ENCODE measurements at regions of chr1 and their contacts with region 1.

Region 1: DNA sequence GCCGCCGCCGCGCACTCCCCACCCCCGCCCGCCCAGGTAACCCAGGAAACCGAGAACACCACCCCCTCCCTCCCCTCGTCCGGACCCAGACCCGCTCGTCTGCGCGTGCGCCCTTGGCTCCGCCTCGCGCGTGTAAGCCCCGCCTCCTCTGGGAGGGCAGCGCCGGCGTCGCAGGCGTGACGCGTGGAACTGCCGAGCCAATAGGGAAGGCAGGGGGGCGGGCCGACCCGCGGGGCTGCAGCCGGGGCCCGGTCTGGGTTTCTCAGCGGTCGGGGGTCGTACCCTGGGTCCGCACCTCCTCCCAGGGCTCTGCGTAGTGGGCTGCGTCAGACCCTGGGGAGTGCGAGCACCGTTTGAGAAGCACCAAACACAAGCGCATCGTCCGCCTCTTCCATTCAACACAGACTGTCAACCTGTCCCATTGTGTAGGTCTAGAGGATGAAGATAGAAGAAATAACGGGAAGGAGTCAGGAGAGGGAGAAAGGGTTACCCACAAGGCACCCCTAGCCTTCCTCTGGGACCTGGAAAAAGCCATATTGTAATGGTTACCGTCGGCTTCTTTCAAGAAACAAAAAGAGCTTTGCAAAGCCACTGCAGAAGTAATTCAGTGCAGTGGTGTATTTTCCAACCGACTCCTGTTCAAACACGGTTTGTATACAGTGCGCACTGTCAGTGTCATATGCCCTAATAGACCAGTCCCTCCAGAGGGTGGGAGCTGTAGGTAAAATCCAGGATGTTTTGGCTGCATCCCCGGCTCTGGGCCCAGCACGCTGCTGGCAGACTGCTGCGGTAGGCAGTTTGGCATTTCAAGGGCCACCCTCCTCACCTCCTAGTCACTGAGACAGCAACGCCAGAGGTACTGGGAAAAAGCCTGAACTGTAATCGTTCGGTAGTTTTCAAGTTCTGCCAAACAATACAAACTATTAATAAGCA is 473 bp upstream of the LYST start:
- DNase-seq: peak; percentile 92
- H3K4me3 ChIP-seq: peak overlapping the region; percentile 60 to 97 (median 61)
- H3K27ac ChIP-seq: peak overlapping the region; percentile 1
- H3K4me1 ChIP-seq: peaks cover 13% of the 10 kb centered on the region
- H3K27me3 ChIP-seq: peaks cover 0 to 2% of the 10 kb centered on the region in 2 experiments
- CTCF ChIP-seq: no peak
- POLR2A ChIP-seq: peak; percentile 85

Region 2: DNA sequence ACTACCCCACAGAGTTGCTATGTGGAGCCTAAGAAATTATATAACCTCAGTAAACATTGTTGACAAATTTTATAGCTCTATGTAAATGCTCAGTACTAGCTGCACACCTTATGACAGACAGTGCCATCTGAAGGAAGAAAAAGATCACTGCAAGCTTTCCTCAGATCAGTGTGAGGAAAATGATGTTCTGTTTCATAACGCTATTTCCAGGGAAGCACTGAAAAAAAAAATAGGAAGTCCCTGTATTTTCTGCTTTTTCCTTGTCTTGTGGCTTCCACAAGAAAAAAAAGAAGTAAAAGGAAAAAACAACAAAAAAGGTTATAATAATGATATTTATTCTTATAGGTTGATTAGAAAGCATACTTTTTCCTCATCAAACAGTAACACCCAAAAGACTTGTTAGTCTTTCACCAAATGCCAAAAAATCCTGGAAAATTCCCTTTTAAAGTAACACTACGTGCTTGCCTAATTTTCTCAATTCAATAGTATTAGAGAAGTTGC is 23.7 kb before region 1 on chr1:
- CTCF ChIA-PET with region 1: interaction called, 13 read pairs
- POLR2A ChIA-PET with region 1: no interaction called
- dilution Hi-C with region 1: no loop called
- intact Hi-C with region 1: no loop called
- DNase-seq: peak; percentile 24
- H3K4me3 ChIP-seq: no peak overlapping the region
- H3K27ac ChIP-seq: no peak overlapping the region
- H3K4me1 ChIP-seq: no peaks in the 10 kb centered on the region
- H3K27me3 ChIP-seq: no peaks in the 10 kb centered on the region
- CTCF ChIP-seq: peak in 1 of 2 donors; percentile 16
- POLR2A ChIP-seq: no peak

Region 3: DNA sequence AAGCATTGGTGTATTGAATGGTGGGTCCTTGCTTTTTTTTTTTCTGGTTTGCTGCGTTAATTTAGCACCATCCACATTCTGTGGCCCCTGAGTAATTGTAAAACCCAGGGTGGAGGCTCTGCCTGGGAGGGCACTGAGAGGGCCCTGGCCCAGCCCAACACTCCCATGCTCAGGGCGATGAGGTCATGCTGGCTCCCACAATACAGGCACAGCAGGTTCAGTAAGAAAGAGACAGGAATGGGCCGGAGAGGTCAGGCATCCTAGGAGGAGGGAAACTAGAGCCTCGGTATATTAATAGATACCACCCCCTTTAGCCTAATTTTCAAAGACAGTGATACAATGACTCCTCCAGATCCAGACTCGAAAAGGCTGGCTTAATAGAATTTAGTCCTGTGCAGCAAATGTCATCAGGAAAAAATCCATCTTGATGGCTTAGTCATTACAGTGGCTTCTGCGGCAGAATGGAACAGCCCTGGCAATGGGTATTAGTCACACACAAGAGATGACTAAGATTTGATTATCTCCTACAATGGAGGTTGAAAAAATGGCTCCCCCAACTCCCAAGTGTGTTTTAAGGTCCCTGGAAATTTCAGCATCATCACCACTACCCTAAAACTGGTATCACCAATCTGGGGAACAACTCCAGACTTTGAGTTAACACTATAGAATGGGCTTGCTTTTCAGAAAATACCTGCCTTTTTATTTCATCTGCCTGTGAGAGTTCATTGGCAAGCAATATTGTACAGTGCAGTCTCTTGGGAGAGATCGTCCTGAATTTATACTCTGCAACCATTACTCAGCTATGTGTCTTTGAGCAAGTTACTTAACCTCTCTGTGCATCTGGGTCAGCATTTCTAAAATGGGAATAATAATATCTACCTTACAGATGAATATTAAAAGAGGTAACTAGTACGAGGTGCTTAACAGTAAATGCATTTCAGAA is 43.4 kb after region 1 on chr1:
- CTCF ChIA-PET with region 1: interaction called, 11 read pairs
- POLR2A ChIA-PET with region 1: no interaction called
- dilution Hi-C with region 1: no loop called
- intact Hi-C with region 1: no loop called
- DNase-seq: peak; percentile 82
- H3K4me3 ChIP-seq: no peak overlapping the region
- H3K27ac ChIP-seq: peak overlapping the region; percentile 65
- H3K4me1 ChIP-seq: peaks cover 34% of the 10 kb centered on the region
- H3K27me3 ChIP-seq: no peaks in the 10 kb centered on the region
- CTCF ChIP-seq: no peak
- POLR2A ChIP-seq: no peak

Region 4: GRCh38 chr1:235933017-235933765 is 66.0 kb after region 1 on chr1:
- CTCF ChIA-PET with region 1: interaction called, 22 read pairs
- POLR2A ChIA-PET with region 1: no interaction called
- dilution Hi-C with region 1: no loop called
- intact Hi-C with region 1: no loop called
- DNase-seq: peak; percentile 25
- H3K4me3 ChIP-seq: no peak overlapping the region
- H3K27ac ChIP-seq: no peak overlapping the region
- H3K4me1 ChIP-seq: peaks cover 8% of the 10 kb centered on the region
- H3K27me3 ChIP-seq: no peaks in the 10 kb centered on the region
- CTCF ChIP-seq: no peak
- POLR2A ChIP-seq: no peak

Region 5: GRCh38 chr1:236064674-236065508 is 197.7 kb after region 1 on chr1 and contains the start of gene NID1:
- CTCF ChIA-PET with region 1: interaction called, 3 read pairs
- POLR2A ChIA-PET with region 1: no interaction called
- dilution Hi-C with region 1: no loop called
- intact Hi-C with region 1: loop called (anchors 1 kb)
- DNase-seq: peak; percentile 75
- H3K4me3 ChIP-seq: peak within 1 kb of the TSS; percentile 75 to 89 (median 89)
- H3K27ac ChIP-seq: peak within 1 kb of the TSS; percentile 55
- H3K4me1 ChIP-seq: peaks cover 8% of the 10 kb centered on the region
- H3K27me3 ChIP-seq: no peaks in the 10 kb centered on the region
- CTCF ChIP-seq: peak in 1 of 2 donors; percentile 52
- POLR2A ChIP-seq: peak; percentile 27
- total RNA-seq, gene NID1: 87.0 and 102 TPM in 2 replicates